ENCODE measurements at regions of chr3 and their contacts with region 1.

Region 1: DNA sequence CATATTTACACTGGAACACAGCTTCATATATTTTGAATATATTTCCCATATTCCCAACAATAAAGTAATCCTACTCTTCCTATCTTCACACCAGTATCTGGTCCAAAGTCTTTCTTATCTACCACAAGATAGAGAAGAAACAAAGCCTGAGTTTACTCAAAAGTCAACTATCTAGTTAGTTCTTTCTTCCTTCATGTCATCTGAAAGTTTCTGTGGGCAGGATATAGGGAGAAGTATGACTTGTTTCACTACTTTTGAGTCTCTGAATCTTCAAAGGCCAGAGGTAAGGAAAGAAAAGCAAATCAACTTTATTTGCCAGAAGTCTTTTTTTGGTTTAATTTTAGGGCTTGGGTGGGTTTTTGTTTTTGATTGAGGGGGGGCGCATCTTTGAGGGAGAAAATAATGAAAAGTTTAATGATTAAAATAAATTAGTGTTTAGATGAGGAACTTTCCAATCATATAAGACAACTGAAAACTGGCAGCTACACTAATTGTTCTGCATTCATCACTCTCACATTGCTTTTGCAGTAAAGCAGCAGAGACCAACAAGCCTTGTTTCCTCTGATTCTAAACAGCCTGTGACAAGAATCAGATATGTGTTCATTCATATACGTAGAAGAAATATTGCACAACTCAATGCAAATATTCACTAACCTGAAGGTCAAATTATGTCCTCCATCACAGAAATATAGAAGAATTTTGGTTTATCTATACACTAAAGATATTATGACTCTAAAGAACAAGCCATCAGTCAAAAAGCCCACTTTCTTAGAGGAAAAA is 421.4 kb downstream of the SHQ1 start:
- DNase-seq: no peak
- ATAC-seq: no peak
- H3K4me3 ChIP-seq: peak overlapping the region in 1 of 5 experiments; percentile 24
- H3K4me3 Mint-ChIP-seq: peak overlapping the region; percentile 77
- H3K27ac ChIP-seq: peak overlapping the region in 1 of 2 donors; percentile 9
- H3K27ac Mint-ChIP-seq: no peak overlapping the region
- H3K4me1 ChIP-seq: peaks cover 17 to 50% of the 10 kb centered on the region in 2 donors
- H3K4me1 Mint-ChIP-seq: peaks cover 62% of the 10 kb centered on the region
- H3K27me3 ChIP-seq: no peaks in the 10 kb centered on the region
- H3K27me3 Mint-ChIP-seq: no peaks in the 10 kb centered on the region
- CTCF ChIP-seq: no peak

Region 2: DNA sequence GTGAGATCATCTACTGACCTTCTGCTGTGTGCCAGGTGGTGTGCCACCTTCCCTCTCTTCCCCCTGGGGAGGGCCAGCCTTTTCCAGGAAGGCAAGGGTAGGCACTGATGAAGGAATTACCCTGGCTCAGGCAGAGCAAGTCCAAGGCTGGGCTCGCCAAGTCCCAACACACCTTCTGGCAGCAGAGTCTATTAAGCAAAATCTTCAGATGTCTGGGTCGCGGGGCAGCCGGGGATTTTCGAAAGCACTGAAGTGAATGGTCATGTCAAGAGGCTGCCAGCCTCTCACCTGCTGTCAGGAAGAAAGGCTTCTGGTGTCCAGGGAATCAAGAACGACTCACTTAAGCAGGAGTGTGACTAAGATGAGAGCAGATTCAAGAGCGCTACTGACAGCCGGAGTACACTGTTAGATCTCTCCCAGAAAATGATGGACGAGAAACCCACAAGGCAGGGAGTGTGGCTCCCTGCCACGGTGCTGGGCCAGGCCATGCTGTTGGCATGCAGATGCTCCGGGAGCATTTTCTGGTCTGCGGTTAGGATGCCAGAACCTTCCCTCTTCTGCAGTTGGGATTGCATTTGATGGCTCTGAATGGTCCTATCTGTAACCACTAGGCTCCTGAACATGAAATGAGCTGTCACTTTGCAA is 58.4 kb before region 1 on chr3:
- CTCF ChIA-PET with region 1: no interaction called
- POLR2A ChIA-PET with region 1: no interaction called
- intact Hi-C with region 1: no loop called
- DNase-seq: no peak
- ATAC-seq: no peak
- H3K4me3 ChIP-seq: no peak overlapping the region
- H3K4me3 Mint-ChIP-seq: no peak overlapping the region
- H3K27ac ChIP-seq: no peak overlapping the region
- H3K27ac Mint-ChIP-seq: no peak overlapping the region
- H3K4me1 ChIP-seq: no peaks in the 10 kb centered on the region
- H3K4me1 Mint-ChIP-seq: no peaks in the 10 kb centered on the region
- H3K27me3 ChIP-seq: no peaks in the 10 kb centered on the region
- H3K27me3 Mint-ChIP-seq: peaks cover 1% of the 10 kb centered on the region
- CTCF ChIP-seq: no peak

Region 3: DNA sequence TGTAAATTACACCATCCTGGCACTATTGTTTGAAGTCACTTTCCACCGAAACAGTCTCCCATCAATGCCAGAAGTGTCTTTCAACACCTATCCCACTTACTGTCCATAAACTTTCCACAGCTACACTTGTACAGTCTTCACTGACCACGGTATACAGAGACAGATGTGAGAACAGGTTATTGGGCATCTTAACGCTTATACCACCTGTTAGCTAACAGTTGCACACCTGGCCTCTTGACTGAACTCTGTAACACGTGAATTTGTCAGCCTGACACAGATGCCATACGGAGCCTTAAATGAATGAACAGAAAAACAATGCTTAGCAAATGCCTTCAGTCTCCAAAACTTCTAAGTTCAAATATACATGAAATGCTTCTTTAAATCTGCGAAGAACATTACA is 19.0 kb before region 1 on chr3:
- CTCF ChIA-PET with region 1: no interaction called
- POLR2A ChIA-PET with region 1: no interaction called
- intact Hi-C with region 1: no loop called
- DNase-seq: no peak
- ATAC-seq: no peak
- H3K4me3 ChIP-seq: no peak overlapping the region
- H3K4me3 Mint-ChIP-seq: no peak overlapping the region
- H3K27ac ChIP-seq: no peak overlapping the region
- H3K27ac Mint-ChIP-seq: no peak overlapping the region
- H3K4me1 ChIP-seq: peaks cover 13 to 74% of the 10 kb centered on the region in 2 donors
- H3K4me1 Mint-ChIP-seq: peaks cover 86% of the 10 kb centered on the region
- H3K27me3 ChIP-seq: no peaks in the 10 kb centered on the region
- H3K27me3 Mint-ChIP-seq: no peaks in the 10 kb centered on the region
- CTCF ChIP-seq: no peak

Region 4: DNA sequence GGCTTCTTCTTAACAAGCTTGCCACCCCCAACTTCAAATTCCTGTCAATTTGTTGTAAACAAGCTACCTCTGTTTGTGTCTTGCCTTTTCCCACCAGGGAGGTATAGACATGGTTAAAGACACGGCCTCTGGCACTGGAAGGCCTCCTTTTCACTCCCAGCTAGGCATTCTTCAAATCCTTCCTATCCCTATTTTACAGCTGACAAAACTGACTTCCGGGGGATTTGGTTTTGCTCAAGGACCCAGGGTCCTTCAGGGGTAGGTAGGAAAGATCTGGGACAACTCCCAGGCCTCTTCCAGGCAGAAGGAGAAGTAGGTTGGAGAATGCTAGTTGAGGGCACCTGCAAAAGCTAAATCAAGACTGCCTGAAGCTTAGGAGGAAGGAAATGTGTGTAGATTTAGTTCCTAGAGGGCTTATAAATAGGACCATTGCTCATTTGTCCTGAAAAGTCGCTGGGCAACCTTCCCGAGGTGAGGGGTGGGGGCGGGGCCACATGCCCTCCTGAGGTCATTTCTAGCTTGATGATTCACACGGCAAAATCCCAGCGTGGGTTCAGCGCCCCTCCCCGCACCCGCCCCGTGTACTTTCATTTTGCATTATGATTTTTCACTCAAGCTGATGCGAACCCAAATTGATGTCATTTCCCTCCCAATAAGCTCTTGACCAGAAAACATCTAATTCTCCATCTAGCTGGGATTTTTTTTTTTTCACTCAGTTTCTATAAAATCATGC is 55.9 kb after region 1 on chr3:
- CTCF ChIA-PET with region 1: no interaction called
- POLR2A ChIA-PET with region 1: no interaction called
- intact Hi-C with region 1: loop called (anchors 5 kb)
- DNase-seq: peak; percentile 46
- ATAC-seq: peak; percentile 68
- H3K4me3 ChIP-seq: peak overlapping the region in 4 of 5 experiments; percentile 1 to 69 (median 50)
- H3K4me3 Mint-ChIP-seq: peak overlapping the region; percentile 81
- H3K27ac ChIP-seq: peak overlapping the region in 1 of 2 donors; percentile 2
- H3K27ac Mint-ChIP-seq: peak overlapping the region; percentile 47
- H3K4me1 ChIP-seq: peaks cover 10% of the 10 kb centered on the region in 2 donors
- H3K4me1 Mint-ChIP-seq: peaks cover 18% of the 10 kb centered on the region
- H3K27me3 ChIP-seq: peaks cover 0 to 10% (median 0%) of the 10 kb centered on the region in 4 experiments
- H3K27me3 Mint-ChIP-seq: peaks cover 20% of the 10 kb centered on the region
- CTCF ChIP-seq: no peak

Region 5: GRCh38 chr3:72618739-72619138 is 191.9 kb after region 1 on chr3:
- CTCF ChIA-PET with region 1: no interaction called
- POLR2A ChIA-PET with region 1: no interaction called
- intact Hi-C with region 1: no loop called
- DNase-seq: no peak
- ATAC-seq: no peak
- H3K4me3 ChIP-seq: no peak overlapping the region
- H3K4me3 Mint-ChIP-seq: no peak overlapping the region
- H3K27ac ChIP-seq: no peak overlapping the region
- H3K27ac Mint-ChIP-seq: no peak overlapping the region
- H3K4me1 ChIP-seq: peaks cover 0 to 7% of the 10 kb centered on the region in 2 donors
- H3K4me1 Mint-ChIP-seq: peaks cover 4% of the 10 kb centered on the region
- H3K27me3 ChIP-seq: peaks cover 0 to 20% (median 0%) of the 10 kb centered on the region in 4 experiments
- H3K27me3 Mint-ChIP-seq: peaks cover 27% of the 10 kb centered on the region
- CTCF ChIP-seq: no peak

Region 6: GRCh38 chr3:72969766-72970165 is 543.0 kb after region 1 on chr3:
- CTCF ChIA-PET with region 1: no interaction called
- POLR2A ChIA-PET with region 1: no interaction called
- intact Hi-C with region 1: no loop called
- DNase-seq: no peak
- ATAC-seq: no peak
- H3K4me3 ChIP-seq: no peak overlapping the region
- H3K4me3 Mint-ChIP-seq: no peak overlapping the region
- H3K27ac ChIP-seq: no peak overlapping the region
- H3K27ac Mint-ChIP-seq: no peak overlapping the region
- H3K4me1 ChIP-seq: peaks cover 8 to 13% of the 10 kb centered on the region in 2 donors
- H3K4me1 Mint-ChIP-seq: peaks cover 12% of the 10 kb centered on the region
- H3K27me3 ChIP-seq: peaks cover 0 to 3% (median 0%) of the 10 kb centered on the region in 4 experiments
- H3K27me3 Mint-ChIP-seq: peaks cover 10% of the 10 kb centered on the region
- CTCF ChIP-seq: no peak

Measured in B cell (primary cell).